ENCODE measurements at regions of chr17 and their contacts with region 1.

Region 1: GRCh38 chr17:48816774-48817590 is at the start of gene TTLL6:
- DNase-seq: peak; percentile 91
- ATAC-seq: peak; percentile 98
- H3K4me3 ChIP-seq: peak within 1 kb of the TSS; percentile 53
- H3K27ac ChIP-seq: peak within 1 kb of the TSS; percentile 36
- H3K4me1 ChIP-seq: peaks cover 14% of the 10 kb centered on the region
- H3K27me3 ChIP-seq: peaks cover 13% of the 10 kb centered on the region
- CTCF ChIP-seq: no peak
- total RNA-seq, gene TTLL6: 2.7 TPM

Region 2: GRCh38 chr17:48878918-48879898 is 62.2 kb after region 1 on chr17:
- intact Hi-C with region 1: loop called (anchors 5 kb)
- DNase-seq: no peak
- ATAC-seq: peak; percentile 89 to 92
- H3K4me3 ChIP-seq: no peak overlapping the region
- H3K27ac ChIP-seq: no peak overlapping the region
- H3K4me1 ChIP-seq: peaks cover 7% of the 10 kb centered on the region
- H3K27me3 ChIP-seq: no peaks in the 10 kb centered on the region
- CTCF ChIP-seq: peak; percentile 93

Measured in lower lobe of right lung (tissue), 2 donors.